ENCODE measurements at regions of chr21 and their contacts with region 1.

Region 1: DNA sequence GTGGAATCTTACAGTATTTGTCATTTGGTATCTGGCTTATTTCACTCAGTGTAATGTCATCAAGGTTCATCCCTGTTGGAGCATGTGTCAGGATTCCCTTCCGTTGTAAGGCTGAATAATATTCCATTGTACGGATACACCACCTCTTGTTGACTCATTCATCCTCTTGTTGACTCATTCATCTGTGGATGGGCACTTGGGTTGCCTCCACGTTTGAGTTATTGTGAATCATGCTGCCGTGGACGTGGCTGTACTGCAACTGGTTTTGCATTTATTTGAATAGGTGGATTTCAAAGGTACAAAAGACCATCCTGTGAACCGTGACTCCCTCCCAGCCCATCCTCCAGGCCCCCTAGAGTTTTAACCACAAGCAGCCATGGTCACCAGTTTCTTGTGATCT is 11.9 kb upstream of the TCP10L start:
- DNase-seq: no peak
- ATAC-seq: no peak
- H3K4me3 Mint-ChIP-seq: no peak overlapping the region
- H3K27ac Mint-ChIP-seq: no peak overlapping the region
- H3K4me1 Mint-ChIP-seq: peaks cover 7% of the 10 kb centered on the region
- H3K27me3 Mint-ChIP-seq: no peaks in the 10 kb centered on the region
- CTCF ChIP-seq: no peak

Region 2: GRCh38 chr21:32383812-32384211 is 213.4 kb before region 1 on chr21:
- CTCF ChIA-PET with region 1: interaction called, 11 read pairs
- POLR2A ChIA-PET with region 1: no interaction called
- intact Hi-C with region 1: no loop called
- DNase-seq: no peak
- ATAC-seq: no peak
- H3K4me3 Mint-ChIP-seq: no peak overlapping the region
- H3K27ac Mint-ChIP-seq: no peak overlapping the region
- H3K4me1 Mint-ChIP-seq: peaks cover 31% of the 10 kb centered on the region
- H3K27me3 Mint-ChIP-seq: no peaks in the 10 kb centered on the region
- CTCF ChIP-seq: no peak

Region 3: GRCh38 chr21:32392880-32393676 is 204.1 kb before region 1 on chr21 and contains the start of gene URB1:
- CTCF ChIA-PET with region 1: interaction called, 26 read pairs
- POLR2A ChIA-PET with region 1: interaction called, 5 read pairs
- intact Hi-C with region 1: no loop called
- DNase-seq: peak; percentile 93
- ATAC-seq: peak; percentile 99
- H3K4me3 Mint-ChIP-seq: peak within 1 kb of the TSS; percentile 86
- H3K27ac Mint-ChIP-seq: peak within 1 kb of the TSS; percentile 83
- H3K4me1 Mint-ChIP-seq: peaks cover 44% of the 10 kb centered on the region
- H3K27me3 Mint-ChIP-seq: peaks cover 3% of the 10 kb centered on the region
- CTCF ChIP-seq: no peak
- total RNA-seq, gene URB1: 30.9 to 31.8 TPM

Region 4: DNA sequence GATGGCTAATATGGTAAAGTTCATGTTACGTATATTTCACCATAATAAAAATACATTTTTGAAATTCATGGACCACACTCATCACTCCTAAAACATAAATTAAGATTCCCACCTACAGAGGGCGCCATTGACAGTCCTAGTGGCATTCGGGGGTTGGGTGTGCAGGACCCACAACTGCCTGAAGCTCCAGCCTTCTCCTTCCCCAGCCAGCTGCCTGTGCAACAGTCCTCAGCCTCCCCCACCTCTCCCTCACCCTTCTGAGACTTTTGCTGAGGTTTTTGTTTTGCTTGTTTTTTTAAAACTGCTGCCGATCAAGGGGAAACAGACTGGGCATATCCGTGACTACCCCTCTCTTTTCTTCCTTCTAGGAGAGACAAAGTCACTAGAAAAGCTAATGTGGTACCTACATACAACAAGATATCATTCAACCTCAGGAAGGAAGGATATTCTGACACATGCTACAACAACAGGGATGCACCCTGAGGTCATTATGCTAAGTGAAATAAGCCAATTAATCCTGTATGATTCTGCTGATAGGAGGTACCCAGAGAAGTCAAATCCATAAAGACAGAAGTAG is 193.9 kb before region 1 on chr21:
- CTCF ChIA-PET with region 1: interaction called, 80 read pairs
- POLR2A ChIA-PET with region 1: no interaction called
- intact Hi-C with region 1: loop called (anchors 1 kb)
- DNase-seq: peak; percentile 78
- ATAC-seq: peak; percentile 92
- H3K4me3 Mint-ChIP-seq: no peak overlapping the region
- H3K27ac Mint-ChIP-seq: no peak overlapping the region
- H3K4me1 Mint-ChIP-seq: peaks cover 3% of the 10 kb centered on the region
- H3K27me3 Mint-ChIP-seq: peaks cover 5% of the 10 kb centered on the region
- CTCF ChIP-seq: peak; percentile 83

Region 5: GRCh38 chr21:32532636-32533035 is 64.6 kb before region 1 on chr21:
- CTCF ChIA-PET with region 1: no interaction called
- POLR2A ChIA-PET with region 1: no interaction called
- intact Hi-C with region 1: no loop called
- DNase-seq: no peak
- ATAC-seq: no peak
- H3K4me3 Mint-ChIP-seq: no peak overlapping the region
- H3K27ac Mint-ChIP-seq: no peak overlapping the region
- H3K4me1 Mint-ChIP-seq: peaks cover 14% of the 10 kb centered on the region
- H3K27me3 Mint-ChIP-seq: no peaks in the 10 kb centered on the region
- CTCF ChIP-seq: no peak

Region 6: GRCh38 chr21:32569261-32570230 is 27.7 kb before region 1 on chr21:
- CTCF ChIA-PET with region 1: interaction called, 33 read pairs
- POLR2A ChIA-PET with region 1: interaction called, 3 read pairs
- intact Hi-C with region 1: no loop called
- DNase-seq: peak; percentile 93
- ATAC-seq: peak; percentile 95
- H3K4me3 Mint-ChIP-seq: peak overlapping the region; percentile 86
- H3K27ac Mint-ChIP-seq: peak overlapping the region; percentile 79
- H3K4me1 Mint-ChIP-seq: peaks cover 20% of the 10 kb centered on the region
- H3K27me3 Mint-ChIP-seq: no peaks in the 10 kb centered on the region
- CTCF ChIP-seq: peak; percentile 90

Region 7: GRCh38 chr21:32612075-32612998 is 15.1 kb after region 1 on chr21 and contains the start of gene CFAP298:
- CTCF ChIA-PET with region 1: interaction called, 67 read pairs
- POLR2A ChIA-PET with region 1: no interaction called
- intact Hi-C with region 1: no loop called
- DNase-seq: peak; percentile 93
- ATAC-seq: peak; percentile 92
- H3K4me3 Mint-ChIP-seq: peak within 1 kb of the TSS; percentile 99
- H3K27ac Mint-ChIP-seq: peak within 1 kb of the TSS; percentile 81
- H3K4me1 Mint-ChIP-seq: peaks cover 10% of the 10 kb centered on the region
- H3K27me3 Mint-ChIP-seq: no peaks in the 10 kb centered on the region
- CTCF ChIP-seq: no peak
- total RNA-seq, gene CFAP298: 36.2 to 39.5 TPM

Region 8: DNA sequence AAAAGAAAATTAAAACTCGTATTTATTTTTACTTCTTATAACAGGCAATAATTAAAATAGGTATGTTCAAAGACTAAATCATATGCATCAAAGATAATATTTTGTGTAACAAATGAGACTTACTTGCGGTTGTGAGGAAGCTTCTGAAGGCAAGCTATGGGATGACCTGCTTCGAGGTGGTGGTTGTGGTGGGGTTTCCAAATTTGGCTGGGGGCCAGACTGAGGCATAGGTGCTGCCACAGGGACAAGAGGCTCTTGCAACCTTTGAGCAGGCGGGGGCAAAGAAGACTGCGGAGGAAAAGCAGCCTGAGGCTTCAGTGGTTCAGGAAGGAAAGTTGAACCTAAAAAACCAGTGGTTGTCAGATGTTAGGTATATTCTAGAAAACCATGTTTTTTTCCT is 41.6 kb after region 1 on chr21:
- CTCF ChIA-PET with region 1: no interaction called
- POLR2A ChIA-PET with region 1: no interaction called
- intact Hi-C with region 1: no loop called
- DNase-seq: no peak
- ATAC-seq: no peak
- H3K4me3 Mint-ChIP-seq: no peak overlapping the region
- H3K27ac Mint-ChIP-seq: no peak overlapping the region
- H3K4me1 Mint-ChIP-seq: no peaks in the 10 kb centered on the region
- H3K27me3 Mint-ChIP-seq: no peaks in the 10 kb centered on the region
- CTCF ChIP-seq: no peak

Region 9: DNA sequence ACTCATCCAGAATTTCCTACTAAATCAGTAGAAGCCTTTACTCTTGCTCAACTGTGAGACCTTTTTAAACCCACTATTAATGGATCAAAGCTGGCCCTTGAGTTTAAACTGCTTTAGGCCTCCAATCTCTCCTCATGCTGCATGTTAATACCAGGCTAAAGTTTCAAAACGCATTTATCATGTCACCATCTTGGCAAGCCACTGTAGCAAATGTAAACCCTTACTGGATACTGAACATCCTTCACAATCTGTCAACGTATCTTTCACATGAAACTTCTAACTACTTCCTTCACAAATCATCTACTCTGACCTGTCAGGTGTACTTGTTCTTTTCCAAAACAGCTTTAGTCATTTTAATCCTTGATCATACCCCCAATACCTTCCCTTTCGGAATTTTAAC is 171.3 kb after region 1 on chr21:
- CTCF ChIA-PET with region 1: no interaction called
- POLR2A ChIA-PET with region 1: no interaction called
- intact Hi-C with region 1: no loop called
- DNase-seq: no peak
- ATAC-seq: no peak
- H3K4me3 Mint-ChIP-seq: peak overlapping the region; percentile 97
- H3K27ac Mint-ChIP-seq: no peak overlapping the region
- H3K4me1 Mint-ChIP-seq: peaks cover 64% of the 10 kb centered on the region
- H3K27me3 Mint-ChIP-seq: no peaks in the 10 kb centered on the region
- CTCF ChIP-seq: no peak